ENCODE measurements at regions of chr6 and their contacts with region 1.

Region 1: DNA sequence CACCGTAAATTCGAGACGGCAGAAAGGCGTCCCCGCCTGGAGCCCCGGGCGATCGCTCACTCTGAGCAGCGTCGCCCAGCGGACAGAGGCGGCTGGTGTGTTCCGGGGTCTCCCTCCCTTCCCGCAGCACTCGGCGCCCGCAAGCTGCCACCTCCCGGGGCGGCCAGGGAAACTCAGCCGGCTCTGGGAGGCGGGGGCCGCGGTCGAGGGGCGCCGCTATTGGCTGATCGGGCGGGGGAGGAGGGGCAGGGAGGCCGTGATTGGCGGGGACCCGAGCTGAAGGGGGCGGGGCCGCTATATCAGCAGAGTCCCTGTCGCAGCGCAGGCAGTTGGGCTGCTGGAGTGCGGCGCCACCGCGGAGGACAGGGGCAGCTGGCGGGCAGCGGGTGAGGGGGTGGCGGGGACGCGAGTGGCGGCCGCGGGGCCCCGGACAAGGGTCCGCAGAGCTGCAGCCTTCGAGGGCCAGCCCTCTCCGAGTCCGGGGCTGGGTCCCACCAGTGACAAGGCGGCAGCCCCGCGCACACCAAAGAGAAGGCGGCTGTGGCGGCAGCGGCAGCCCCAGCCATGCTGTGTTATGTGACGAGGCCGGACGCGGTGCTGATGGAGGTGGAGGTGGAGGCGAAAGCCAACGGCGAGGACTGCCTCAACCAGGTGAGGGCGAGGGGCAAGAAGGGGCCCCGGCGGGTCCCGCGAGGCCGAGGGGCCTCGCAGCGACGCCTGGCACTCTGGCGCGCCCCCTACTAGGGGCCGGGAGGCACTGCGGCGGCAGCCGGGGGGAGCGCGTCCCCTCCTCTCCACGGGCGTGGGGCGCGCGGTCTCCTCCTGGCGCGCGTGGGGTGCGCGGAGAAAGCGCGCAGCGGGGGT is at the start of gene MYLIP:
- DNase-seq: peak; percentile 99
- ATAC-seq: peak; percentile 97
- H3K4me3 ChIP-seq: peak within 1 kb of the TSS; percentile 90 to 98
- H3K27ac ChIP-seq: peak within 1 kb of the TSS; percentile 79 to 98
- H3K4me1 ChIP-seq: peaks cover 2 to 3% of the 10 kb centered on the region in 2 donors
- H3K27me3 ChIP-seq: peaks cover 0 to 2% of the 10 kb centered on the region in 2 donors
- total RNA-seq, gene MYLIP: 35.1 to 43.9 TPM

Region 2: GRCh38 chr6:15691250-15691869 is 437.6 kb before region 1 on chr6:
- intact Hi-C with region 1: loop called (anchors 5 kb)
- DNase-seq: peak; percentile 91 to 94
- ATAC-seq: peak; percentile 98
- H3K4me3 ChIP-seq: peak overlapping the region; percentile 74 to 75
- H3K27ac ChIP-seq: no peak overlapping the region
- H3K4me1 ChIP-seq: no peaks in the 10 kb centered on the region
- H3K27me3 ChIP-seq: no peaks in the 10 kb centered on the region

Region 3: DNA sequence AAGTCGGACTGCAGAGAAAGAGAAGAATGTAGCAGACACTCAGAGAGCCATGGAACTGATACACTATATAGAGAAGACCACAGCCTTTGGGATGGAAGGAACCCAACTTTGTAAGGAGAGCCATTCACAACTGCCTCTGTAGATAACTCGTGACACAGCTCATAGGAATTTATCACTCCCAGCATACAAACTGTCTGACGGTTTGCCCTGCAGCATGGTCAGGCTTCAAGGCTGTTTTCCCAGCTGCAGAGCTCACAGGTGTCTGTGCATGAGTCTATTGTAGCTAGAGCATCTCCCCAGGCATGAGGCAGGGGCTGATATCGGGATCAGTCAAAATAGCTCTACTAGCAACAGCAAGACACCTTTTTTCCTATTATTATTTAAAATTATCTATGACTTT is 335.7 kb before region 1 on chr6:
- intact Hi-C with region 1: loop called in 1 of 2 experiments (anchors 10 kb)
- DNase-seq: no peak
- ATAC-seq: no peak
- H3K4me3 ChIP-seq: no peak overlapping the region
- H3K27ac ChIP-seq: peak overlapping the region; percentile 15 to 18
- H3K4me1 ChIP-seq: peaks cover 5% of the 10 kb centered on the region in 2 donors
- H3K27me3 ChIP-seq: no peaks in the 10 kb centered on the region

Region 4: DNA sequence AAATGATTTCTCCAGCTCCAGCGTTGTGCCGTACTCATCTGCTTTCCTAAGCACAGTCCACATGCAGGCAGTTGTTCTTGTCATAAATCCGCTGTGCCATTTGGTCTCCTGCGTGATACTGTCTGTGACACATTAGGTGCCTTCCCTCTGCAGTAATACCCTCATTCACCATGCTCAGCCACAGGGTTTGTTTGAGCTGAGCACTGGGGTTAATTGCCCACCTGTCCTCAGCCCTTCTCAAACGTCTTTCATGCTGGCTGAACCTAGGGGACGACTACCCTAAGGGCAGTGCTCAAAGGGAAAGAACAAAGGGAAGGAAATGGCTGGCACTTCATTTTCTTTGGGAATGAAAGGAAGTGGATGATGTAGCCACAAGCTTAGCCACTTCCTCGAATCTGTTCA is 64.3 kb before region 1 on chr6:
- intact Hi-C with region 1: no loop called
- DNase-seq: no peak
- ATAC-seq: no peak
- H3K4me3 ChIP-seq: no peak overlapping the region
- H3K27ac ChIP-seq: no peak overlapping the region
- H3K4me1 ChIP-seq: no peaks in the 10 kb centered on the region
- H3K27me3 ChIP-seq: no peaks in the 10 kb centered on the region

Region 5: GRCh38 chr6:16183187-16183664 is 54.2 kb after region 1 on chr6:
- intact Hi-C with region 1: loop called in 1 of 2 experiments (anchors 5 kb)
- DNase-seq: no peak
- ATAC-seq: peak; percentile 78
- H3K4me3 ChIP-seq: no peak overlapping the region
- H3K27ac ChIP-seq: peak overlapping the region; percentile 15 to 50
- H3K4me1 ChIP-seq: no peaks in the 10 kb centered on the region
- H3K27me3 ChIP-seq: peaks cover 0 to 1% of the 10 kb centered on the region in 2 donors

Region 6: GRCh38 chr6:16206595-16207037 is 77.6 kb after region 1 on chr6:
- intact Hi-C with region 1: loop called in 1 of 2 experiments (anchors 2 kb)
- DNase-seq: no peak
- ATAC-seq: peak; percentile 93
- H3K4me3 ChIP-seq: no peak overlapping the region
- H3K27ac ChIP-seq: peak overlapping the region; percentile 48 to 80
- H3K4me1 ChIP-seq: peaks cover 0 to 2% of the 10 kb centered on the region in 2 donors
- H3K27me3 ChIP-seq: no peaks in the 10 kb centered on the region